Panc1 (cell line): ENCODE measurements at regions of chr1 and their contacts with region 1.

Region 1: DNA sequence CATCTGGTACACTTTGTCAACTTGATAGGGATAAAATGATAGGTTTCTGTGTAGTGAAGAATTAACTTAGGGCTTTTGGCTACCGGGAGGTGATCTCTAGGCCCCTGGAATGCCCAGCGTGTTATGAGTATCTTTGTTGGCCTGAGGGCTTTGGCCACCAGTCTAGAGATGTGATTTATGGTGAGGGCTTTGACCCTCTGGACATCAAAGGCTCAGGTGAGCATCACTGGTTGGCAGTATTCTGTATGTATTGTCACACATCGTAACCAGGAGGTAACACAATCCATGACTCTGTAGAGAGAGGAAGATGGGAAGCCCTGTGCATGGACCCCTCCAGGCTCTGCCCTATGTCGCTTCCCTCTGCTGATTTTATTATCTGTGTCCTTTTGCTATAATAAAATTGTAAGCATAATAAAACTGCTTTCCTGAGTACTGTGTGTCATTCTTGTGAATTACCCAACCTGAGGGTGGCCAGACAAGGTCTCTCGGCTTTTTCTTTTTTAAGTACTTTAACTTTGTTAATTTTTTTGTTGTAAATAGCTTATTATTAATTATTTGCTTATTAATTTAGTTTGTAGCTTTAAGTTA is 40.2 kb upstream of the PRDX6 start:
- DNase-seq: no peak
- ATAC-seq: no peak
- H3K4me3 ChIP-seq: no peak overlapping the region
- H3K27ac ChIP-seq: no peak overlapping the region
- H3K4me1 ChIP-seq: no peaks in the 10 kb centered on the region
- H3K27me3 ChIP-seq: no peaks in the 10 kb centered on the region
- CTCF ChIP-seq: no peak

Region 2: GRCh38 chr1:173476664-173477285 is 39.8 kb after region 1 on chr1:
- CTCF ChIA-PET with region 1: interaction called, 4 read pairs
- POLR2A ChIA-PET with region 1: no interaction called
- in situ Hi-C with region 1: loop called (anchors 5 kb)
- intact Hi-C with region 1: loop called (anchors 2 kb)
- DNase-seq: no peak
- ATAC-seq: peak; percentile 95
- H3K4me3 ChIP-seq: peak overlapping the region; percentile 80 to 95
- H3K27ac ChIP-seq: peak overlapping the region; percentile 85
- H3K4me1 ChIP-seq: peaks cover 36% of the 10 kb centered on the region
- H3K27me3 ChIP-seq: no peaks in the 10 kb centered on the region
- CTCF ChIP-seq: no peak